Pancreas (tissue), 10 donors: ENCODE measurements at regions of chr10 and their contacts with region 1.

Region 1: DNA sequence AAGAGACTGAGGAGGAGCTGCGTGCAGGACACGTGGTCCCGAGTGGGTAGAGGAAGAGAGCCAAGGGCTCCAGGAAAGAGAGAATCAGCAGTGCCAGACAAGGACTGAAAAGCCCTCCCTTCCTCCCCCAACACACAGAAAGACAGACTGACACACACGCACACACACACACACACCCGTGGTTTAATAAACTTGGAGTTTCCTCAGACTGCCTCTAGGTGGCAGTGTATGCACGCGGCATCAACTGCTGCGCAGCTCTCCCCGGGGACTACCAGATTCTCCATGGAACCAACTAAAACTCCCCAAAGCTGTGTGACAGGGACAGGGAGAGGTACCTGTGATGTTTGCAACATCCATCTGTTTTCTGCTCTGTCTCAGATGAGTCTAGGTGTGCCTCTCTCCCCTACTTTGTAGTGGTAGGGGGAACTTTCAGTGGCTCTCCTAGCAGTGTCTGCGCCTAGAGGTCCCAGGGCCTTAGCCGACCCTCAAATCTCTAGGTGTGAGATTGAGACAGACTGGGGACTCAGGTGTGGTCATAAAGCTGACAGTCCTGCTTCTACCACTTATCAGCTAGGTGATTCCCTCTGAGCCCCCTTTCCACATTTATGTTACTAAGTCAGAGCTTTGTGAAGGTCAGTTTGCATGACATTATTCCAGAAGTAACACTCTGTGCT is 9.3 kb upstream of the TSPAN14 start:
- DNase-seq: peak; percentile 55 to 76 (median 68)
- ATAC-seq: peak; percentile 93 to 98 (median 97)
- H3K4me3 ChIP-seq: no peak overlapping the region
- H3K27ac ChIP-seq: no peak overlapping the region
- H3K4me1 ChIP-seq: no peaks in the 10 kb centered on the region
- H3K27me3 ChIP-seq: no peaks in the 10 kb centered on the region
- CTCF ChIP-seq: peak; percentile 37 to 78 (median 62)

Region 2: GRCh38 chr10:80500572-80501380 is 56.0 kb after region 1 on chr10:
- intact Hi-C with region 1: loop called (anchors 5 to 10 kb)
- DNase-seq: peak in 1 of 6 donors; percentile 40
- ATAC-seq: no peak
- H3K4me3 ChIP-seq: no peak overlapping the region
- H3K27ac ChIP-seq: peak overlapping the region in 3 of 4 donors; percentile 61 to 84 (median 80)
- H3K4me1 ChIP-seq: peaks cover 27 to 79% (median 41%) of the 10 kb centered on the region in 3 donors
- H3K27me3 ChIP-seq: no peaks in the 10 kb centered on the region
- CTCF ChIP-seq: no peak

Region 3: DNA sequence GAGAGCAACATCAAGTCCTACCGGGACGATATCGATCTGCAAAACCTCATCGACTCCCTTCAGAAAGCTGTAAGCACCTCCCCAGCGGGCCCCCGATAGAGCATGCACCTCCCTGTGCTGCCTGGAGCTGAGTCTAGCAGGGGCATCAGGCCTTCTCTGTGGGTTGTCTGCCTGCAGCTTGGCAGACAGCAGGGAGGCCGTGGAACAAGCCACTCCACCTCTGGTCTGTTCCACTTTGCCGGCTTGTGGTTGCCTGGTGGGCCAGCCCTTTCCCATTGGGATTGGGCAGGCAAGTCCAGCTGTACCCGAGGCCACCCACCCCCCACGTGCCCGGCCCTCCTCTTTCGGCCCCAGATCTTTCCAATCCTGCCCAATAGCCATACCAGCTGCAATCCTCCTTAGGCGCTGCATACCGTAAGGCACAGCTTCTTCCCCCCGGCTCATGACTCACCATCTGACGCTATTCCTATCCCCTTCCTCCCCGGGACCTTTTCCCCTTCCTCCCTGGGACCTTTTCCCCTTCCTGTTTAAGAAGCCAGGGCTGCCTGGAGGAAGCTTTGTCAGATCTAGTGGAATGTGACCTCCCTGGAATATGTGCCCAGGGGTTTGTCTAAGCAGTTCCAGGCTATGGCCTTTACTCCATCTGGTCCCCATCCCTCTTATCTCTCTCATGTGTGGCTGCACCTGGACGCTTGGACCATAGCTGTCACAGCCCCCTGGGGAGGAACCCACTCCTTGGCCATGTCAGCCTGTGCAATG is 64.8 kb after region 1 on chr10:
- intact Hi-C with region 1: loop called (anchors 5 to 10 kb)
- DNase-seq: no peak
- ATAC-seq: peak in 1 of 4 donors; percentile 13
- H3K4me3 ChIP-seq: no peak overlapping the region
- H3K27ac ChIP-seq: no peak overlapping the region
- H3K4me1 ChIP-seq: peaks cover under 1 to 17% (median 6%) of the 10 kb centered on the region in 3 donors
- H3K27me3 ChIP-seq: no peaks in the 10 kb centered on the region
- CTCF ChIP-seq: no peak